Motor neuron (in vitro differentiated cells): ENCODE measurements at regions of chr14 and their contacts with region 1.

Region 1: GRCh38 chr14:73295198-73295796 is 58.0 kb downstream of the PAPLN start:
- ATAC-seq: peak in 2 of 8 experiments; percentile 32 to 42
- H3K4me3 ChIP-seq: no peak overlapping the region
- H3K27ac ChIP-seq: no peak overlapping the region
- H3K4me1 ChIP-seq: no peaks in the 10 kb centered on the region

Region 2: DNA sequence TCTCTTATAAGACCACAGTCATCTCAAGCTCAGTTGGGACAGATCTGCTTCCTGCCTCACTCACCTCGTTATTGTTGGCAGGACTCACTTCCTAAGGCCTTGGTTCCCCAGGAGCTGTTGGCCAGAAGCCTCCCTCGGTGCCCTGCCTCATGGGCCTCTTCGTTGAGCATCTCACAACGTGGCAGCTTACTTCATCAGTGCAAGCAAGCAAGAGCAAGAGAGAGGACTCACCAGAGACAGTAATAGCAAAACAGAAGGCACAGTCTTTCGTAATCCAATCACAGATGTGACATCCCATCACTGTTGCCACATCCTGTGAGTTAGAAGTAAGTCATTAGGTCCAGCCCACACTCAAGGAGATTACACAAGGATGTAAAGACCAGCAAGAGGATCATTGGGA is 168.1 kb after region 1 on chr14:
- in situ Hi-C with region 1: loop called in 3 of 9 experiments (anchors 10 to 25 kb)
- ATAC-seq: peak in 2 of 8 experiments; percentile 11 to 12
- H3K4me3 ChIP-seq: no peak overlapping the region
- H3K27ac ChIP-seq: no peak overlapping the region
- H3K4me1 ChIP-seq: peaks cover 4 to 7% of the 10 kb centered on the region in 2 donors

Region 3: GRCh38 chr14:73472185-73473114 is 177.2 kb after region 1 on chr14:
- in situ Hi-C with region 1: loop called in 5 of 9 experiments (anchors 10 to 25 kb)
- ATAC-seq: peak; percentile 57 to 95 (median 76)
- H3K4me3 ChIP-seq: no peak overlapping the region
- H3K27ac ChIP-seq: no peak overlapping the region
- H3K4me1 ChIP-seq: peaks cover 0 to 5% of the 10 kb centered on the region in 2 donors